Heart left ventricle (tissue), 16 donors: ENCODE measurements at regions of chr4 and their contacts with region 1.

Region 1: DNA sequence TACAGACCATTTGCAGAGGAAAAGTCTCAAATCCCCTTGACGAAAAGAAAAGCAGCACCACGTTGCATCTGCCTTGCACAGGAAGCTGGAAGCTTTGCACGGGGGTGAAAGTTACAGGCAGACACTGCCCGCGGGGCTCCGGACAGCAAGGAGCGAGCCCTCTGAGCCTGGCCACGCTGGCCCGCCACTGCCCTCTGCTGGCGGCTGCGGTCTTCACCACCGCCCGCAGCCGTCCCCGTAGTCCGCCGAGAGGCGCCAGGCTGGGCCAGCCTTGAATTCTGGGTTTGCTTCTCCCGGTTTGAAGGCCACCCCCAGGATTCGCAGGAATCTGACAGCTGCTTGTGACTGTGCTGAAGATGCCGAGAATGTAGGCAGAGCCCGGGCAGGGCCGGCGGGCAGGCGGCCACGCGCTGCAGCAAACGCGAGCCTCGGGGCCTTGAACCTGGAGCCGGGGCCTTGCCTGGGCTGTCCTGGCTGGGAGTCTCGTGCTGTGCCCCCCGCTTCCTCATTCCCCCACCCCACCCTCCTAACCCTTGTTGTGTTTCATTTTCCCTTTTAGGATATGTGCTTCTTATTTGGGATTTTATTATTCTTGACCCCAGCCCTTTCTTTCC is 49.2 kb downstream of the ENPP6 start:
- DNase-seq: peak; percentile 72 to 90 (median 79)
- ATAC-seq: peak; percentile 73 to 96 (median 96)
- H3K4me3 ChIP-seq: peak overlapping the region in 4 of 12 donors; percentile 1 to 38 (median 18)
- H3K27ac ChIP-seq: no peak overlapping the region
- H3K4me1 ChIP-seq: peaks cover 0 to 7% (median 1%) of the 10 kb centered on the region in 12 donors
- H3K27me3 ChIP-seq: peaks cover 0 to 27% (median 0%) of the 10 kb centered on the region in 9 donors
- CTCF ChIP-seq: peak; percentile 88 to 99 (median 96)
- POLR2A ChIP-seq: no peak

Region 2: DNA sequence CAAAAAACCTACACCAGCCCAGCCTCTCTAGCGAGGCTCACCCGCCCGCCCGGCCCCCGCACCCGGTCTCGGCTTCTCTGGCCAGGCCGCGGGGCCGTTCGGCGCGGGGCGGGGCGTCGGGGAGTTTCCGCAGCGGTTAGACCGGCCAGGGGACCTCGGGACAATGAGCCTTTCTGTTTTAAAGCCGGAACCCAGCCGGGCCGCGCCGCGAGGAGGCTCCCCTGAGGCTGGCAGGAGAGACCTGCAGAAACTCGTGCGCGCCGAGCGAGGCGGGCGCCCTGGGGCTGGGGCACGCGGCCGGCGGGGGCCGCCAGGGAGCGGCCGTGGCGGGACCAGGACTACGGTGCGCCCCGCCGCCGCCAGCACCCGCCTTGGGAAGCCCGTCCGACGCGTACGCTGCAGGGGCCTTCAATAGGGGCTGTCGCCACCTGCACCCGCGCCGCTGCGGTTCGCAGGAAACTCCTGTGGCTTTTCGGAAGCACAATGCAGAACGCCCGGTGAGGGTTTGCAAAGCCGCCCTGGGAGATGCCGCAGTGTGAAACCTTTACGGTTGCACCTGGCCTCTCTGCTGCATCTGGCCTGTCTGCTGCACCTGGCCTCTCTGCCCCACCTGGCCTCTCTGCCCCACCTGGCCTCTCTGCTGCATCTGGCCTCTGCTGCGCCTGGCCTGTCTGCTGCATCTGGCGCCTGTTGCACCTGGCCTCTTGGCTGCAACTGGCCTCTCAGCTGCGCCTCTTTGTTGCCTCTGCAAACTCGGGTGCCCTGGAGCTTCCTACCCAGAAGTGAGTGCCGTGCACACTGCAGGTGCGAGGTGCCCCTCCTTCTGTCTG is 445.6 kb before region 1 on chr4:
- intact Hi-C with region 1: loop called in 4 of 10 experiments (anchors 5 to 10 kb)
- DNase-seq: peak; percentile 61 to 86 (median 72)
- ATAC-seq: peak; percentile 24 to 78 (median 75)
- H3K4me3 ChIP-seq: peak overlapping the region; percentile 32 to 70 (median 58)
- H3K27ac ChIP-seq: peak overlapping the region in 11 of 12 donors; percentile 3 to 74 (median 44)
- H3K4me1 ChIP-seq: peaks cover 0 to 18% (median 1%) of the 10 kb centered on the region in 12 donors
- H3K27me3 ChIP-seq: no peaks in the 10 kb centered on the region
- CTCF ChIP-seq: peak in 4 of 12 donors; percentile 7 to 31 (median 13)
- POLR2A ChIP-seq: no peak

Region 3: GRCh38 chr4:183860731-183861130 is 307.8 kb before region 1 on chr4:
- intact Hi-C with region 1: no loop called
- DNase-seq: no peak
- ATAC-seq: peak in 1 of 4 donors; percentile 39
- H3K4me3 ChIP-seq: no peak overlapping the region
- H3K27ac ChIP-seq: no peak overlapping the region
- H3K4me1 ChIP-seq: peaks cover 0 to 12% (median 0%) of the 10 kb centered on the region in 12 donors
- H3K27me3 ChIP-seq: no peaks in the 10 kb centered on the region
- CTCF ChIP-seq: no peak
- POLR2A ChIP-seq: no peak

Region 4: GRCh38 chr4:184100297-184100885 is 68.1 kb before region 1 on chr4:
- intact Hi-C with region 1: loop called in 7 of 10 experiments (anchors 5 kb)
- DNase-seq: peak; percentile 26 to 85 (median 46)
- ATAC-seq: peak; percentile 57 to 80 (median 70)
- H3K4me3 ChIP-seq: no peak overlapping the region
- H3K27ac ChIP-seq: no peak overlapping the region
- H3K4me1 ChIP-seq: peaks cover 0 to 35% (median 12%) of the 10 kb centered on the region in 12 donors
- H3K27me3 ChIP-seq: no peaks in the 10 kb centered on the region
- CTCF ChIP-seq: peak in 11 of 12 donors; percentile 53 to 91 (median 65)
- POLR2A ChIP-seq: no peak